ENCODE measurements at regions of chr11 and their contacts with region 1.

Region 1: GRCh38 chr11:114180301-114181055 is 115.7 kb upstream of the NNMT start:
- DNase-seq: no peak
- H3K4me3 ChIP-seq: no peak overlapping the region
- H3K27ac ChIP-seq: no peak overlapping the region
- H3K4me1 ChIP-seq: no peaks in the 10 kb centered on the region
- H3K27me3 ChIP-seq: no peaks in the 10 kb centered on the region
- CTCF ChIP-seq: peak; percentile 66 to 84

Region 2: GRCh38 chr11:113806406-113806805 is 374.1 kb before region 1 on chr11:
- CTCF ChIA-PET with region 1: no interaction called
- dilution Hi-C with region 1: no loop called
- in situ Hi-C with region 1: no loop called
- intact Hi-C with region 1: loop called (anchors 10 kb)
- DNase-seq: peak; percentile 21
- H3K4me3 ChIP-seq: no peak overlapping the region
- H3K27ac ChIP-seq: no peak overlapping the region
- H3K4me1 ChIP-seq: no peaks in the 10 kb centered on the region
- H3K27me3 ChIP-seq: no peaks in the 10 kb centered on the region
- CTCF ChIP-seq: peak; percentile 48 to 59

Region 3: DNA sequence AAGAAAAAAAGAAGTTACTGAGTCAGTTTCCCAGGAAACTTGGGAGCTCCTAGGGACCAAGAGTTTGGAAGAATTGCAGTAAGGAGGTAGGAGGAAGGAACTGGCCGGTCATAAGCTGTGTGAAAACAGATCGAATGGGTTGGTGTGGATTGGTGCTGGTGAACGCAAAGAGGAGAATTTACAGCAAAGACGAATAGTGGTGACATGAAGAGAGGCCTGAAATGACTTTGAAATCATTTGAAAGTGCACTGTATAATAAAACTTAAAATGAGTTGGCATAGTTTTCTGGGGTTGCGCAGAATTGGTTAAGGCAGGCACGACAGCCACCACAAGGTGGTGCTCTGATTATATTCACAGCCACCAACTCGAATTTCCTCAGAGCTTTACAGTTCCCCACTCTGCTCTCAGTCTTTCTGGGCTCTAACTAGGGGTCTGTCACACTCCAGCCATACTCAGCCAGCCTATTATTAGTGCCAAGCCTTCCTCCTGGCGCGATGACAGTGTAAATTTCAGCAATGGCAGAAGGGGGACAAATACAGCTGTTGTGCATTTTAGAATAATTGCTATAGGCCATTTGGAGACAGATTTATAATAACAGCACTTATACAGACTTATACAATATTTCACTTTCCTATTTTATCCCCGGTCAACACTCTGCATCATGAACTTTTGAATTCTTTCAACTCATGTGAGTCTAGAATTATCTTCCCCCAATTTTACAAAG is 284.2 kb before region 1 on chr11:
- CTCF ChIA-PET with region 1: no interaction called
- dilution Hi-C with region 1: no loop called
- in situ Hi-C with region 1: no loop called
- intact Hi-C with region 1: loop called (anchors 1 kb)
- DNase-seq: no peak
- H3K4me3 ChIP-seq: no peak overlapping the region
- H3K27ac ChIP-seq: no peak overlapping the region
- H3K4me1 ChIP-seq: no peaks in the 10 kb centered on the region
- H3K27me3 ChIP-seq: no peaks in the 10 kb centered on the region
- CTCF ChIP-seq: peak; percentile 68 to 74

Region 4: GRCh38 chr11:113994077-113994954 is 186.2 kb before region 1 on chr11:
- CTCF ChIA-PET with region 1: no interaction called
- dilution Hi-C with region 1: no loop called
- in situ Hi-C with region 1: no loop called
- intact Hi-C with region 1: loop called (anchors 1 kb)
- DNase-seq: no peak
- H3K4me3 ChIP-seq: no peak overlapping the region
- H3K27ac ChIP-seq: no peak overlapping the region
- H3K4me1 ChIP-seq: no peaks in the 10 kb centered on the region
- H3K27me3 ChIP-seq: no peaks in the 10 kb centered on the region
- CTCF ChIP-seq: peak; percentile 51 to 73

Region 5: DNA sequence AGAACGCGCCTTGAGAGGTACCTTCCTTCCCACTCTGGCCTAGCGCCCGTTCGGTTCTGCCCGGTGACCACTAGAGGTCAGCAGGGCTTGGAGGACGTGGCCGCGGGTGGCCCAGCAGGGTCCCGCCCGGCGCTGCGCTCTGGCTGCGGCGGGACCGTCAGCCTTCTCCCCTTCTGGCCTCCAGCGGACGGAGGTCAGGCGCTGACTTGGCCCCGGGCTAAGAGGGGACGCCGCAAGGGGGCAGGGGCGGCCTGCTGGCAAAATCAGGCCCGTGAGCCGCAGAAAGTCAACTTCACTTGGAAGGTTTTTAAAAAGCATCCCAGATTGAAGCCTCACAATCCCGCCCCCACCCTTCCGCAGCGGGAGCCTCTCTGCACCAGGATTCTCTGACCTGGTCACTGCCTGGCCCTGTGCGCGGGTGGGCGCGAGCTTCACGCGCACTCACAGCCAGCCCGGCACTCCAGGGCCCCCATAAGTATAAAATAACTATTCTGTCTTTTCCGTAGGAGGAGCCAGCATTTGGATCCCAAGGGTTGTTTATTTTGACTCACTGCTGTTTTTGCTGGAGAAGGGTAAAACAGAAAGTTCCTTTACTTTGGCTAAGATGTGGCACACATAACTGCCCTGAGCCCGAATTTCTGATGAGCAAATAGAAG is 144.2 kb before region 1 on chr11:
- CTCF ChIA-PET with region 1: interaction called, 7 read pairs
- dilution Hi-C with region 1: no loop called
- in situ Hi-C with region 1: loop called in 1 of 2 experiments (anchors 5 kb)
- intact Hi-C with region 1: loop called (anchors 1 kb)
- DNase-seq: peak; percentile 48
- H3K4me3 ChIP-seq: peak overlapping the region; percentile 33 to 53 (median 34)
- H3K27ac ChIP-seq: no peak overlapping the region
- H3K4me1 ChIP-seq: no peaks in the 10 kb centered on the region
- H3K27me3 ChIP-seq: no peaks in the 10 kb centered on the region
- CTCF ChIP-seq: peak; percentile 80 to 93

Region 6: DNA sequence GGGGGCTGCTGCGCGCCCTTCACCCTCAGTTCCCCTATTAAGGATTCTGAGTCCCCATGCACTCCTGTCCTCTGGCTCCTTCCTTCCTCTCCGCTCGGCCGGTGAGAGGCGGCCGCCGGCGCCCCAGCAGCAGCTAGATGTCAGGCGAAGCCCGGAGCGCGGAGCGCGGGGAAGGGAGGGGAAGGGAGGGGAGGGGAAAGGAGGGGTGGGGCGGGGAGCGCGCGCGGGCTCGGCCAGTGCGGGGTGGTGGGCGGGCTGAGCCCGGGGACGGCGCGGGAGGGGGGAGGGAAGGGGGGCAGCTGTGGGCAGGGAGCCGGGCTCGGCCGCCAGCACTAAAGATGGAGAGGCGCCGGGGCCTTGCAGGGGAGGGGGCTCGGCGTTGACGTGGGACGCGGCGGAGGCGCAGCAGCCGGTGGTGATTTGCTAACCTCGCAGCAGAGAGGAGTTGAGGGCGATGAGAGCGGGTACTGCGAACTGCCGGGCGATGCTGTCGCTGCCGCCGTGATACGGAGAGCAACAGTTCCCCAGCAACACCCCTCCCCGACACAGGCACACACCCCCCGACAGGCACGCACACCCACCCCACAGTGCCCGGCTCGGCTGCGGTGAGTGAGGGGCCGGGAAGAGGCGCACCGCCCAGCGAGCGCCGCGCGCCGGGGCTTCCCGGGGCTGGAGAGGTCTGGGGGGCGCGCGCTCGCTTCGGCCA is 121.0 kb before region 1 on chr11 and contains the start of gene ZBTB16:
- CTCF ChIA-PET with region 1: interaction called, 5 read pairs
- dilution Hi-C with region 1: no loop called
- in situ Hi-C with region 1: loop called in 1 of 2 experiments (anchors 10 kb)
- intact Hi-C with region 1: loop called (anchors 1 kb)
- DNase-seq: no peak
- H3K4me3 ChIP-seq: peak within 1 kb of the TSS; percentile 51 to 94 (median 51)
- H3K27ac ChIP-seq: no peak within 1 kb of the TSS
- H3K4me1 ChIP-seq: peaks cover 14% of the 10 kb centered on the region
- H3K27me3 ChIP-seq: peaks cover 42% of the 10 kb centered on the region
- CTCF ChIP-seq: peak in 1 of 2 donors; percentile 57
- total RNA-seq, gene ZBTB16: 1.6 to 20.2 TPM

Region 7: DNA sequence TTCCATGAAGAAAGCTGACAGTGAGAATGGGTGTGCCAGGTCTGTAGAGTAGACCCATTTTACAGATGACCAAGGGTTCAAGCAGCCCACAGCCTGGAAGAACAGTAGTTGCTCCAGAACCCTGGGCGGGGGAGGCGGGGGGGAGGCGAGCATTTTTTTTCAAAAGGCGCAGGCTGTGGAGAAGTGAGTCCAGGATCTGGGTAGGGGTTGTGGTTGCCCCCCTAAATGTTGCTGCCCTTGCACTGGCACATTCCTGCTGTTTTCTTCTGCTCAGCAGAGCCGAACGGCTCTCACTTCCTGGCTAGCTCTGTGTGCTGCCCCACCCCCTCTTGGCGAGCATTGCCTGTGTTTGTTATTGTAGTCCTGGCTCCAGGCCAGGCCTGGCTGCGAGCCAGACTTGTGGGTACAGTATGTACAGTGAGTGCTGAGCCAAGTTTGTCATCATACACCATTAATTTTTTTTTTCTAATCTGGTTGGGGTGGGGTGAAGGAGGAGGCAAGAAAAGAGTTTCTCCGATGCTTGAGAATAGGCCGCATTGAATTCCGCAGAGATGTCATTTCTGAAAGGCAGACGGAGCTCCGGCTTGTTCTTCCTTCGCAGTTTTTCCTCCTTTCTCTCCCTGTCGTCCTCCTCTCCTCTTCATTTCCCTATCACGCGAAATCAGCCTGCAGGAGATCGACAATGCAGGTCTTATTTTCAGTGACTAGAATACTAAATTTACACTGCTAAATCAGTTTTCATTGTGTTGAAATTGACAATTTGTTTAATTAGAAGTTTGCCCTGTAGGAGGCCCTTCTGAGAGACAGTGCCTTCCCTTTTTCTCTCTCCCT is 20.5 kb before region 1 on chr11:
- CTCF ChIA-PET with region 1: no interaction called
- dilution Hi-C with region 1: no loop called
- in situ Hi-C with region 1: no loop called
- intact Hi-C with region 1: loop called (anchors 1 kb)
- DNase-seq: peak; percentile 97
- H3K4me3 ChIP-seq: peak overlapping the region; percentile 10 to 33 (median 26)
- H3K27ac ChIP-seq: peak overlapping the region; percentile 89
- H3K4me1 ChIP-seq: peaks cover 58% of the 10 kb centered on the region
- H3K27me3 ChIP-seq: no peaks in the 10 kb centered on the region
- CTCF ChIP-seq: no peak

Measured in mammary epithelial cell (primary cell).